ENCODE measurements at regions of chr10 and their contacts with region 1.

Region 1: GRCh38 chr10:133373104-133373624 is at the start of gene ECHS1:
- DNase-seq: peak; percentile 100

Region 2: GRCh38 chr10:133357285-133358151 is 15.6 kb before region 1 on chr10 and contains the start of gene FUOM:
- CTCF ChIA-PET with region 1: interaction called, 4 read pairs
- POLR2A ChIA-PET with region 1: interaction called, 23 read pairs
- DNase-seq: peak; percentile 98